HEK293T (cell line): ENCODE measurements at regions of chr13 and their contacts with region 1.

Region 1: GRCh38 chr13:30617315-30618185 is at the start of gene USPL1:
- DNase-seq: peak; percentile 92

Region 2: DNA sequence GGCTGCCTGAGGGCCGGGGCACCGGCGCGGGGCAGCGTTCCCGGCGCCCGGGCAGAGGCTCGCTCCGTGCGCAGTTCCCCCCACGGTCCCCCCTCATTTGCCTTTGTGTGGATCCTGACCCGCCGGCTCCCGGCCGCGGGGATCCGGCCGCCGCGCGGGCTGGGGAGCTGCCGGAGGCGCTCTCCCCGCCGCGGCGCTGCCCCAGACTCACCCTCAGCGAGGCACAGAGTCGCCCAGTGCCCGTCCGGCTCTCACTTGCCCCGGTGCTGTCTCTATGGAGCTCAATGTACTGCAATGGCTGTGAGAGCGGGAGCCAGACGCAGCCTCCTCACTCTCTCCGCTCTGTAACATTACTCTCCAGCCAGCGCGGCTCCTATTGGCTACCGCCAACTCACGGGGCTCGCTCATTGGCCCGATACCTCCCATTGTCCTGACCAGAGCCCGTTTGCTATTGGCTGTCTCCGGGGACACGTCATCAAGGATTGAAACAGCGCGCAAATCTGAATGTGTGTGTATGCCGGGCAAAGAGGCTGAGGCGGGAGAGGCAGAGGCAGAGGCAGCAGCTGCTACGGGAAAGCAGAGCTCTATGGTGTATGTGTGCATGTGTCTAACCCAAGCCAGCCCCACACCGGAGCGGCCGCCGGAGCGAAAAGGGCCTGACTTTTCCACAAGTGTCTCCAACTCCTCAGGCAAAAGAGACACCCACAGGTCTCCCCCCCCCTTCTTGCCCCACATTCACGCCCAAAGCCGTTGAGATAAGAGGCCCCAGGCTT is 151.8 kb before region 1 on chr13 and contains the start of gene HMGB1:
- CTCF ChIA-PET with region 1: no interaction called
- POLR2A ChIA-PET with region 1: interaction called, 10 read pairs
- DNase-seq: peak; percentile 93